ENCODE measurements at regions of chr3 and their contacts with region 1.

Region 1: GRCh38 chr3:112437146-112438022 is 61.9 kb downstream of the BTLA start:
- DNase-seq: peak; percentile 4
- ATAC-seq: peak; percentile 87
- H3K4me3 ChIP-seq: no peak overlapping the region
- H3K27ac ChIP-seq: no peak overlapping the region
- H3K4me1 ChIP-seq: no peaks in the 10 kb centered on the region
- H3K27me3 ChIP-seq: no peaks in the 10 kb centered on the region
- CTCF ChIP-seq: peak; percentile 74

Region 2: GRCh38 chr3:111723293-111724215 is 713.8 kb before region 1 on chr3:
- CTCF ChIA-PET with region 1: no interaction called
- POLR2A ChIA-PET with region 1: no interaction called
- in situ Hi-C with region 1: no loop called
- intact Hi-C with region 1: no loop called
- DNase-seq: no peak
- ATAC-seq: no peak; the same call in 1 of the 2 replicates
- H3K4me3 ChIP-seq: no peak overlapping the region
- H3K27ac ChIP-seq: no peak overlapping the region
- H3K4me1 ChIP-seq: no peaks in the 10 kb centered on the region; the same call in 1 of the 2 replicates
- H3K27me3 ChIP-seq: peaks cover 2% of the 10 kb centered on the region; the same call in 1 of the 2 replicates
- CTCF ChIP-seq: no peak

Region 3: DNA sequence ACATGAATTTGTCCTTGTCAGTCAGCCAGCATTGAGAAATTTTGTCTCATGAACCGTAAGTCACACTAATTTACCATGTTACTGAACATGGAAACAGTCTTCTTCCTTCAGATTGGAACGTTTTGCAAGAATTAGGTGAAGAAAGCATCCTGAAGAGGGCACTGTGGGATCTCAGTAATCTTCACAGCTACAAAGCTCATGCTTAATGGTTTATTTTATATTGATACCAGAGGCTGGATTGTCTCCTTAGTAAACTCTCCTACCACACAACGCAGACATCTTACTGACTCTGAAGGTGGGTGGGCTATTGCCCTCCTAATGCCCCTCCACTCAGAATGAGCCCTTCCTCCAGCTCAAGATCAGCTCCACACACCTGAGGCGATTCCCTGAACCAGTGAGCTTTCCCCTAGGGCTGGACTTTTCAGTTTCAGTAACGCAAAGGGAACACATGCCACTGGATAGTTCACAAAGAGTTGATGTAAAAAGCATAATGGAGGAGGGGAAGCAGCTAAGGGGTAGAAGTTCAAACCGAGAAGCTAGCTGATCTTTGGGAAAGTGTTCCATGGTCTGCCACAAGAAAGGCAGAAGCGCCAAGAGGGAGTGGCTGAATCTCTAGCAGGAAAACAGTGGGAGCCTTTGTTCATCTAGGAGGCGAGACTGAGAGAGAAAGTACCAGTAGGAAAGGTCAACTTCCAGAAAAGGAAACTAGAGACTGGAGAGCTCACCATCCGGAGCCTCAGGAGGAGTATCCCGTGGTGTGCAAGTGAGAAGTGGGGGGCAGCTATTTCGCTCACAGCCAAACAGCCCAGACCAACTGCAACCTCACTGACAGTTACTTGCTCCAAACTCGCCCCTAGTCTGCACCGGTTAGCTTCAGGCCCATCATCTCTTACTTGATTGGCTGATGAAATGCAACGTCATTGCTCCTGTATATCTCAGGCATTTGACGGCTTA is 143.7 kb before region 1 on chr3 and contains the start of gene SLC9C1:
- CTCF ChIA-PET with region 1: interaction called, 13 read pairs
- POLR2A ChIA-PET with region 1: no interaction called
- in situ Hi-C with region 1: no loop called
- intact Hi-C with region 1: no loop called
- DNase-seq: peak; percentile 58
- ATAC-seq: peak; percentile 92
- H3K4me3 ChIP-seq: peak within 1 kb of the TSS; percentile 19 to 49
- H3K27ac ChIP-seq: no peak within 1 kb of the TSS
- H3K4me1 ChIP-seq: no peaks in the 10 kb centered on the region
- H3K27me3 ChIP-seq: no peaks in the 10 kb centered on the region
- CTCF ChIP-seq: peak; percentile 78
- total RNA-seq, gene SLC9C1: not detected

Region 4: DNA sequence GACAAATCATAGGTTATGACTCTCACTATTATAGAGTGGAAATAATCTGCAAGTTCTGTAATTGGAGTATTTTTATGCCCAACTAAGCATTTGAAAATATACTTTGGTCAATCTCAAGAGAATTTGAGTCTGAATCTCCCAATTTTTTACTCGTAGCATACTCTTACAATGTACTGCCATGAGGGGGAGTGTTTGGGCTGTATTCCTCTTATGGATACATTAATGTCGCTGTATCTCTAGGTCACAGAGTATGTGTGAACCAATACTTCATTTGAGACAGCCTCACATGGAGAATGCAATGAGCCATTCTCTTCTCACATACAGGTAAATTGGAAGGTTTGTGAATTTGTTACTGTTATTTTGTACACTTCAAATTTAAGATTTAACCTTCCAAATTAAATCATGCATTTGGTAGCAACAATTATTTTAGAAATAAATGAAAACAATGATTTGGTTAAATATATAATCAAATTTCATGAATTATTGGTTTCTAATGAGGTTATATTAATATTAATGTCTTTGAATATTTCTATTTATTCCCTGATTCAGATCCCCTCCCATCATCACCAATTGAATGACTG is 109.9 kb before region 1 on chr3:
- CTCF ChIA-PET with region 1: no interaction called
- POLR2A ChIA-PET with region 1: no interaction called
- in situ Hi-C with region 1: no loop called
- intact Hi-C with region 1: loop called (anchors 5 kb)
- DNase-seq: no peak
- ATAC-seq: peak; percentile 96
- H3K4me3 ChIP-seq: no peak overlapping the region
- H3K27ac ChIP-seq: no peak overlapping the region
- H3K4me1 ChIP-seq: no peaks in the 10 kb centered on the region
- H3K27me3 ChIP-seq: peaks cover 4% of the 10 kb centered on the region; the same call in 1 of the 2 replicates
- CTCF ChIP-seq: peak; percentile 64; the same call in 1 of the 2 replicates

Region 5: DNA sequence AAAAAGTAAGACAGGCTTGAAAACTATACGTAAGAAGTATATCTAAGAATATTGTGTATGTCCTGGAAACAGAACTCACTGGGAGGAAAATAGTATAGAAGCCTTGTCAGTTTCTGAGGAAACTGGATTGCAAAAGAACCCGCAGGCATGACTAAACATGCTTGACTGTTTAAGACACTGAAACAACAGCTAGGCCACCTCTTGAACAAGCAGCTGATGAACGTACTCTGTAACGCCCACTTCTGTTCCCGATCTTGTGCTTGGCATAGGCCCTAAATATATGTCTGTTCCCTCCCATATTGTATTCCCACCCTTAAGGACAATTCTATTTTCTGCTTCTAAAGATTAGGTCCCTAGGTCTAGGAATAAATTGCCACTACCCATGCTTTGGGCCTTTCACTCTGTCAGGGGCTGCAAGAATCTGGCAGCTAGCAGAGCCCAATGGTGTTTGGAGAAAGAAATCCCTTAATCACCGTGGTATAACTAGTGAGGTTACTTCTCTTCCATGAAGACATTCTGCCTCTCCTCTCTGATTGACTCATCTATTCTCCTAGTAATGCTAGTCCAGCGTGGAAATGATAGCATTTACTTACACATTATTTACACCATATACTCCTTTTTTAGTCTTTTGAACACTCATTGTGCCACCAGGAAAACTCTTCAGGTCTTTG is 58.2 kb before region 1 on chr3:
- CTCF ChIA-PET with region 1: no interaction called
- POLR2A ChIA-PET with region 1: no interaction called
- in situ Hi-C with region 1: no loop called
- intact Hi-C with region 1: no loop called
- DNase-seq: no peak
- ATAC-seq: no peak
- H3K4me3 ChIP-seq: no peak overlapping the region
- H3K27ac ChIP-seq: no peak overlapping the region
- H3K4me1 ChIP-seq: no peaks in the 10 kb centered on the region
- H3K27me3 ChIP-seq: no peaks in the 10 kb centered on the region
- CTCF ChIP-seq: no peak

Region 6: GRCh38 chr3:112555535-112556170 is 118.3 kb after region 1 on chr3:
- CTCF ChIA-PET with region 1: no interaction called
- POLR2A ChIA-PET with region 1: no interaction called
- in situ Hi-C with region 1: no loop called
- intact Hi-C with region 1: no loop called
- DNase-seq: no peak
- ATAC-seq: no peak
- H3K4me3 ChIP-seq: no peak overlapping the region
- H3K27ac ChIP-seq: no peak overlapping the region
- H3K4me1 ChIP-seq: peaks cover 18% of the 10 kb centered on the region; the same call in 1 of the 2 replicates
- H3K27me3 ChIP-seq: no peaks in the 10 kb centered on the region
- CTCF ChIP-seq: no peak

Measured in Panc1 (cell line).